ENCODE measurements at regions of chr1 and their contacts with region 1.

Region 1: GRCh38 chr1:18597160-18598042 is 33.2 kb upstream of the PAX7 start:
- DNase-seq: peak; percentile 69 to 81 (median 76)
- ATAC-seq: peak; percentile 98
- H3K4me3 ChIP-seq: no peak overlapping the region
- H3K27ac ChIP-seq: no peak overlapping the region
- H3K4me1 ChIP-seq: no peaks in the 10 kb centered on the region
- H3K27me3 ChIP-seq: peaks cover 7 to 25% of the 10 kb centered on the region in 2 experiments
- CTCF ChIP-seq: peak; percentile 93 to 98 (median 97)
- EP300 ChIP-seq: no peak
- POLR2A ChIP-seq: no peak
- RAD21 ChIP-seq: peak; percentile 87 to 98

Region 2: GRCh38 chr1:18511149-18511873 is 86.1 kb before region 1 on chr1:
- CTCF ChIA-PET with region 1: no interaction called
- POLR2A ChIA-PET with region 1: no interaction called
- in situ Hi-C with region 1: no loop called
- intact Hi-C with region 1: no loop called
- DNase-seq: no peak
- ATAC-seq: no peak
- H3K4me3 ChIP-seq: no peak overlapping the region
- H3K27ac ChIP-seq: no peak overlapping the region
- H3K4me1 ChIP-seq: no peaks in the 10 kb centered on the region
- H3K27me3 ChIP-seq: peaks cover 0 to 2% of the 10 kb centered on the region in 2 experiments; a peak in 1 of 5 replicates
- CTCF ChIP-seq: peak in 2 of 3 experiments; percentile 6 to 43; a peak in 2 of 6 replicates
- EP300 ChIP-seq: no peak
- POLR2A ChIP-seq: no peak
- RAD21 ChIP-seq: peak; percentile 42 to 44; a peak in 3 of 4 replicates

Region 3: GRCh38 chr1:18681423-18681835 is 84.0 kb after region 1 on chr1:
- CTCF ChIA-PET with region 1: interaction called, 4 read pairs
- POLR2A ChIA-PET with region 1: no interaction called
- in situ Hi-C with region 1: no loop called
- intact Hi-C with region 1: loop called (anchors 1 kb)
- DNase-seq: peak; percentile 61 to 87 (median 82)
- ATAC-seq: peak; percentile 91
- H3K4me3 ChIP-seq: no peak overlapping the region
- H3K27ac ChIP-seq: no peak overlapping the region
- H3K4me1 ChIP-seq: no peaks in the 10 kb centered on the region
- H3K27me3 ChIP-seq: peaks cover 23 to 56% of the 10 kb centered on the region in 2 experiments; a peak in 4 of 5 replicates
- CTCF ChIP-seq: peak; percentile 76 to 83 (median 78)
- EP300 ChIP-seq: no peak
- POLR2A ChIP-seq: no peak
- RAD21 ChIP-seq: peak; percentile 26 to 86; a peak in 3 of 4 replicates

Region 4: DNA sequence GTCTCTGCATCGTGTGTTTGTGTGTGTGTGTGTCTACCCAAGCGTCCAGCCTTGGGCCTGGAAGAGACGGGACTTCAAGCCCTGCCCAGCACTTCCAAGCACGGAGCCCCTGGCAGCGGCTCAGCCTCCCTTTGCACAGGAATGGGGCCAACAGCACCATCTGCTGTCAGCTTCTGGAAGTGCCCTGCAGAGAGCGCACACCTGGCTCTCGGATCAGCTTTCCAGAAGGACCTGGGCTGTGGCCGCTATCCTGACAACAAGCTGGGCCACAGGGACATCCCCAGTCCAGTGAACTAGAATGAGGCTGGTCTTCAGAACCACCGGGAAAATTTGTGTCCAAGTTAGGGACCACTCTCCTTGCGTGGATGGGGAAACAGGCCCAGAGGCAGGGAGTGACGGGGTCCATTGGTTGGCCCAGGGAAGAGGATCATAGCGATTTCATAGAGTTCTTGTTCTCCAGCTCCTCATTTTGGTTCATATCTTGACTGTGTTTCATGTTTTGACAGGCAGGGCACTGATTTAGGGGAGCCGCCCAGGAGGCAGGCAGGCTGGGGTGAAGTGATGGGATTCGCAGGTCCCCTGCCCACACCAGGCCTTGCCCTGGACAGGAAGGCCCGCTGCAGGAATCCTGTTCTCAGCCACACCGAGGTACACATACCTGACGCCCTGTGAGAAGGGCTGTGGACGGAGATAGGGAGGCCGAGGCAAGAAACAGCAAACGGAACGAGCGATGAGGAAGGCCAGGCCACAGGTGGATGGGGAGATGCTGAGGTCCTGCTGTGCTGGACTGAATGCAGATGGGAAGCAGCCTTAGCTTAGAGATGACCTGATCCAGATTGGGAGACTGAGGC is 223.6 kb after region 1 on chr1:
- CTCF ChIA-PET with region 1: interaction called, 73 read pairs
- POLR2A ChIA-PET with region 1: interaction called, 3 read pairs
- in situ Hi-C with region 1: loop called (anchors 5 kb)
- intact Hi-C with region 1: loop called (anchors 1 kb)
- DNase-seq: peak; percentile 82 to 91 (median 88)
- ATAC-seq: peak; percentile 97
- H3K4me3 ChIP-seq: no peak overlapping the region
- H3K27ac ChIP-seq: no peak overlapping the region
- H3K4me1 ChIP-seq: peaks cover 0 to 10% of the 10 kb centered on the region in 2 experiments; a peak in 2 of 5 replicates
- H3K27me3 ChIP-seq: peaks cover 5 to 53% of the 10 kb centered on the region in 2 experiments
- CTCF ChIP-seq: peak; percentile 94 to 98 (median 96)
- EP300 ChIP-seq: no peak
- POLR2A ChIP-seq: no peak
- RAD21 ChIP-seq: peak; percentile 83 to 98

Region 5: DNA sequence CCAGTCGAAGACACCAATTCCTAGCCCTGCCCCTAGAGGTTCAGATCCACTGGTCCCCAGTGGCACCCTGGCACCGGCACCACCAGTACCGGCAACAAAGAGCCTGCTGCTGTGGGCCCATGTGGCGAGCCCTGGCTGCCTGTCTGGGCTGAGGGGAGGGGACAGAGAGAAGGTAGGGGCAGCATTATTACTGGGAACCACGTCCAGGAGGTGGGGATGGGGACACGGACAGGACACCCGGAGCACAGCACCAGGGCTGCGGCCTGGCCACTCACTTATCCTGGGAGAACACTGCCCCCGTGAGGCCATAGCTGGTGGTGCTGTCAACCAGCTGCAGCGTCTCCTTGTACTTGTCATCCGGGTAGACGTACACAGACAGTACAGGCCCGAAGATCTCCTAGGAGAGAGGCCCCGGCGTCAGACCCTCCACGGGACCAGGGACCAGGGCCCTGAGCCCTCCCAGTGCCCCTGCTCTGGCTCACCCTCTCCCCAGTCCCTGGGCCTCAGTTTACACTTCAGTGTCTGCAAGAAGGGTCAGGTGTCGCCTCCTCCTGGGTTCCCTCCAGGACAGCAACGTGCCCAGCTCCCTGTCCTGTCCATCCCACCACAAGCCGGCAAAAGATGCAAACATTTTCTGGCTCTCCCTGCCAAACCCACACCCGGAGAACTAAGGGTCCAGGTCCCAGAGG is 277.9 kb after region 1 on chr1:
- CTCF ChIA-PET with region 1: interaction called, 27 read pairs
- POLR2A ChIA-PET with region 1: interaction called, 3 read pairs
- in situ Hi-C with region 1: loop called (anchors 5 kb)
- intact Hi-C with region 1: loop called (anchors 1 kb)
- DNase-seq: peak; percentile 92 to 94 (median 92)
- ATAC-seq: peak; percentile 98
- H3K4me3 ChIP-seq: no peak overlapping the region
- H3K27ac ChIP-seq: no peak overlapping the region
- H3K4me1 ChIP-seq: peaks cover 0 to 23% of the 10 kb centered on the region in 2 experiments; a peak in 2 of 5 replicates
- H3K27me3 ChIP-seq: no peaks in the 10 kb centered on the region; a peak in 1 of 5 replicates
- CTCF ChIP-seq: peak; percentile 96 to 98 (median 97)
- EP300 ChIP-seq: no peak
- POLR2A ChIP-seq: no peak
- RAD21 ChIP-seq: peak; percentile 54 to 92

Measured in K562 (cell line).